ENCODE measurements at regions of chr3 and their contacts with region 1.

Region 1: GRCh38 chr3:115658337-115659181 is 35.2 kb downstream of the GAP43 start:
- DNase-seq: peak; percentile 62 to 76 (median 73)
- H3K4me3 ChIP-seq: peak overlapping the region; percentile 61
- H3K4me3 Mint-ChIP-seq: peak overlapping the region; percentile 91 to 98 (median 95)
- H3K27ac ChIP-seq: peak overlapping the region; percentile 61
- H3K27ac Mint-ChIP-seq: peak overlapping the region; percentile 83 to 100 (median 99)
- H3K4me1 ChIP-seq: peaks cover 28% of the 10 kb centered on the region
- H3K4me1 Mint-ChIP-seq: peaks cover 16 to 32% (median 21%) of the 10 kb centered on the region in 4 donors
- H3K27me3 ChIP-seq: no peaks in the 10 kb centered on the region
- H3K27me3 Mint-ChIP-seq: no peaks in the 10 kb centered on the region

Region 2: GRCh38 chr3:115359536-115359935 is 299.0 kb before region 1 on chr3:
- CTCF ChIA-PET with region 1: no interaction called
- POLR2A ChIA-PET with region 1: no interaction called
- intact Hi-C with region 1: no loop called
- DNase-seq: no peak
- H3K4me3 ChIP-seq: no peak overlapping the region
- H3K4me3 Mint-ChIP-seq: peak overlapping the region in 5 of 8 donors; percentile 1 to 27 (median 17)
- H3K27ac ChIP-seq: no peak overlapping the region
- H3K27ac Mint-ChIP-seq: peak overlapping the region in 1 of 7 donors; percentile 61
- H3K4me1 ChIP-seq: no peaks in the 10 kb centered on the region
- H3K4me1 Mint-ChIP-seq: peaks cover 5 to 8% (median 6%) of the 10 kb centered on the region in 4 donors
- H3K27me3 ChIP-seq: no peaks in the 10 kb centered on the region
- H3K27me3 Mint-ChIP-seq: no peaks in the 10 kb centered on the region

Region 3: DNA sequence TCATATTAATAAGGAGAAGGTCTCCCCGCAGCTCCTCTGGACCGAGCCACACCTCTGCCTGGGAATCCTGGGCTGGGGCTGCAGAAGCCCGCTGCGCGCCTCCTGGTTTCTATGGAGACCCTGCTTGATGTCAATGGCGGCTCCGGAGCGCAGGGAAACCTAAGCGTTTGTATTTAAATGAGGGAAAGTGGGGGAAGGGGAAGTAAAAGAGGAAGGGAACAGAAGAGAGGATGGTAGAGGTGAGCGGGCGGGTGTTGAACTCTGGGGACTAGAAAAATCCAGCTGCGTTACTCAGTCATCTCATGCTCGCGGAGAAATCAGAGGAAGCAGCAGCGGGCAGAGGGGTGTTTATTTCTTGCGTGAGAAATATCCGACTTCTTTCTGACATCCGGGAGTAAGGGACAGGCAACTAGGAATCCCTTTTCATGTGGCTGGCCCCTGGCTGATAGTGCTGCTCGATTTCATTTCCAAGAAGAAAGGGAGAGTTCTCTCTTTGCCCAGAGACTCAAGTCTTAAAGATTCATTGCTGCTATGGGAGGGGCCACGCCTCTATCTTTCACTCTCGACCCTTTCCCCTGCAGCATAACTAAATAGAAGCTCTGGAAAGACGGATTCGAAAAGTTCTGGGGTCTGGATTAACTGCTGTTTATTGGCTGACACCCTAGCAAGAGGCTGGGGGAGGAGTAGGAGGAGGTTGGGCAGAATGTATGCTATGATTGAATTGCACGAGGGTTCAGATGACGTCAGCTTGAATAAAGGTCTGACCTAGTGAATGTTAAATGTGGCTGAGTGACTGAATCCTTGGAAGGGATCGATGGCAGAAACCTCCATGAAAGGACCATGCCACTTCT is 145.8 kb before region 1 on chr3:
- CTCF ChIA-PET with region 1: no interaction called
- POLR2A ChIA-PET with region 1: interaction called, 3 read pairs
- intact Hi-C with region 1: loop called (anchors 5 kb)
- DNase-seq: peak in 4 of 5 donors; percentile 4 to 42 (median 14)
- H3K4me3 ChIP-seq: peak overlapping the region; percentile 33 to 61
- H3K4me3 Mint-ChIP-seq: peak overlapping the region; percentile 89 to 97 (median 94)
- H3K27ac ChIP-seq: no peak overlapping the region
- H3K27ac Mint-ChIP-seq: peak overlapping the region; percentile 4 to 91 (median 76)
- H3K4me1 ChIP-seq: peaks cover 6% of the 10 kb centered on the region
- H3K4me1 Mint-ChIP-seq: peaks cover 3 to 24% (median 16%) of the 10 kb centered on the region in 4 donors
- H3K27me3 ChIP-seq: no peaks in the 10 kb centered on the region
- H3K27me3 Mint-ChIP-seq: peaks cover 7 to 9% of the 10 kb centered on the region in 2 donors